ENCODE measurements at regions of chr6 and their contacts with region 1.

Region 1: GRCh38 chr6:147274053-147274452 is 69.8 kb downstream of the STXBP5 start:
- DNase-seq: no peak
- H3K4me3 ChIP-seq: no peak overlapping the region
- H3K27ac ChIP-seq: no peak overlapping the region
- H3K4me1 ChIP-seq: no peaks in the 10 kb centered on the region
- H3K27me3 ChIP-seq: no peaks in the 10 kb centered on the region

Region 2: GRCh38 chr6:147141711-147142308 is 132.2 kb before region 1 on chr6:
- CTCF ChIA-PET with region 1: no interaction called
- POLR2A ChIA-PET with region 1: no interaction called
- DNase-seq: peak in 1 of 3 donors; percentile 6
- H3K4me3 ChIP-seq: no peak overlapping the region
- H3K27ac ChIP-seq: no peak overlapping the region
- H3K4me1 ChIP-seq: no peaks in the 10 kb centered on the region
- H3K27me3 ChIP-seq: no peaks in the 10 kb centered on the region

Region 3: GRCh38 chr6:147285087-147285855 is 11.2 kb after region 1 on chr6:
- CTCF ChIA-PET with region 1: interaction called, 16 read pairs
- POLR2A ChIA-PET with region 1: no interaction called
- DNase-seq: peak; percentile 65 to 69 (median 67)
- H3K4me3 ChIP-seq: peak overlapping the region in 2 of 7 experiments; percentile 39 to 50
- H3K27ac ChIP-seq: peak overlapping the region; percentile 10 to 54
- H3K4me1 ChIP-seq: peaks cover 8 to 44% (median 18%) of the 10 kb centered on the region in 4 experiments
- H3K27me3 ChIP-seq: no peaks in the 10 kb centered on the region

Region 4: GRCh38 chr6:147298461-147298860 is 24.4 kb after region 1 on chr6:
- CTCF ChIA-PET with region 1: no interaction called
- POLR2A ChIA-PET with region 1: no interaction called
- DNase-seq: no peak
- H3K4me3 ChIP-seq: no peak overlapping the region
- H3K27ac ChIP-seq: no peak overlapping the region
- H3K4me1 ChIP-seq: no peaks in the 10 kb centered on the region
- H3K27me3 ChIP-seq: no peaks in the 10 kb centered on the region